ENCODE measurements at regions of chr3 and their contacts with region 1.

Region 1: DNA sequence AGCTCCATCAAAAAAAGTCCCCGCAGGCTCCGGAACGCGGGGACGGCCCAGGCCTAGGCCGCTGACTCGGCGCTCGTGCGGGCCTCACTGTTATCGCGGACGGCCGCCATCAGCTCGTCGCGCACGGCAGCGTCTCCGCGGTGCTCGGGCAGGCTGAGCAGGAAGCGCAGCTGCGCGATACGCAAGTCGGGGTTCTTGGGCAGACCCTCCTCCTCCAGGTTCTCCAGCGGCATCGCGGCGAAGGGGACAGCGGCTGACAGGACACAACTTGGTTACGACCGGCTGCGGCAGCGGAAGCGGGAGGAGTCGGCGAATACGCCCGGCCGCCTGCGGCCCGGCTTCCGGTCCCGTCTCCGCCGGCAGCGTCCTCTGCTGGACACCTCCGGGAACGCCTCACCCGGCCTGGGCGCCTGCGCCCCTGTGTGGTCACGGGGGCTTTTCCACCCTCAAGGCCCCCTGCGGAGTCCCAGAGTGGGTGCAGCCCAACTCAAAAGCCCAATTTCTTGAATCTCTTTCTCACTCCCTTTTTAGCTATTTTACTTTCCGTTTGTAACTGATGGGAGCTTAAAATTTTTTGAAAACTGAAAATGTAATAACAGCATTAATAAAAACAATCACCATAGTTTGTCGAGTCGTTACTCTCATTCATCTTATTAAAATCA is at the start of gene PSMD6:
- DNase-seq: peak; percentile 81
- H3K4me3 Mint-ChIP-seq: peak within 1 kb of the TSS; percentile 80
- H3K27ac Mint-ChIP-seq: peak within 1 kb of the TSS; percentile 92
- H3K4me1 Mint-ChIP-seq: peaks cover 6% of the 10 kb centered on the region
- H3K27me3 Mint-ChIP-seq: peaks cover 11% of the 10 kb centered on the region
- CTCF ChIP-seq: peak; percentile 97
- total RNA-seq, gene PSMD6: 62.7 and 66.0 TPM in 2 replicates

Region 2: DNA sequence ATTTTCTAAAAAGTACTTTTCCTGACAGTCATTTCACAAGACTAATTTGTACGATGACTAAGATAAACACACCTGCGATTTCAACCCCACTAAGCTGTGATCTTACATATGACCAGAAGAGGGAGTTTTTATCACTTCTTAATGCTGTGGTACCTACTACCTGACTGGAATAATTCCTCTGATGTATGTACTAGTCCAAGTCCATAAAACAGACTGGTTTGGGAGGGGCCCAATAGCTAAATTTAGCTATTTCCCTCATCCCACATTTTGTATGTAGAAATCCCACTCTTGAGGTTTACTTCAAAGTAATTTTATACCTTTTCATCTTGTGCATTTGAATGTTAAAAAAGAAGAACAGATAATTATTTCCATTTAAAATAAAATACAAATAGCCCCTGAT is 61.4 kb before region 1 on chr3:
- CTCF ChIA-PET with region 1: interaction called, 28 read pairs
- POLR2A ChIA-PET with region 1: interaction called, 7 read pairs
- intact Hi-C with region 1: loop called (anchors 2 kb)
- DNase-seq: peak; percentile 76
- H3K4me3 Mint-ChIP-seq: no peak overlapping the region
- H3K27ac Mint-ChIP-seq: no peak overlapping the region
- H3K4me1 Mint-ChIP-seq: peaks cover 13% of the 10 kb centered on the region
- H3K27me3 Mint-ChIP-seq: no peaks in the 10 kb centered on the region
- CTCF ChIP-seq: peak; percentile 52

Region 3: DNA sequence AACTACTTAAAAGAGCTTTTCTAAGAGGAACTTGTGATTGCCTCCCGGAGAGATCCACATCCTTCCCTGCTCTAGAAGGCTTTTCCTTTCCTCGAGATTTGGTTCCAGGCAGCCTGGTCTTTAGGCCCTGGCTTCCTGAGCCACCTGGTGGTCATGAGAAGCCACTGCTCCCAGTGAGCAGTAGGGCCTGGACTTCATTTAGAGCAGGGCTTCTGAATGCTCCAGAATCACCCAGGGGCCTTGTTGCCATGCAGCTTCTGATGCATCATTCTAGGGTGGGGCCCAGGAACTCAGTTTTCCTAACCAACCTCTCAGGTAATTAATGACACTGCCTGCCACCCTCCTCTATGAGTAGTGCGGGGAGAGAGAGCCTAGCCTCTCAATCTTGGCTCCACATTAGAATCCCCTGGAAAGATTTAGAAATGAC is 29.7 kb before region 1 on chr3:
- CTCF ChIA-PET with region 1: interaction called, 19 read pairs
- POLR2A ChIA-PET with region 1: no interaction called
- intact Hi-C with region 1: no loop called
- DNase-seq: peak; percentile 77
- H3K4me3 Mint-ChIP-seq: no peak overlapping the region
- H3K27ac Mint-ChIP-seq: peak overlapping the region; percentile 23
- H3K4me1 Mint-ChIP-seq: no peaks in the 10 kb centered on the region
- H3K27me3 Mint-ChIP-seq: no peaks in the 10 kb centered on the region
- CTCF ChIP-seq: peak; percentile 83

Region 4: DNA sequence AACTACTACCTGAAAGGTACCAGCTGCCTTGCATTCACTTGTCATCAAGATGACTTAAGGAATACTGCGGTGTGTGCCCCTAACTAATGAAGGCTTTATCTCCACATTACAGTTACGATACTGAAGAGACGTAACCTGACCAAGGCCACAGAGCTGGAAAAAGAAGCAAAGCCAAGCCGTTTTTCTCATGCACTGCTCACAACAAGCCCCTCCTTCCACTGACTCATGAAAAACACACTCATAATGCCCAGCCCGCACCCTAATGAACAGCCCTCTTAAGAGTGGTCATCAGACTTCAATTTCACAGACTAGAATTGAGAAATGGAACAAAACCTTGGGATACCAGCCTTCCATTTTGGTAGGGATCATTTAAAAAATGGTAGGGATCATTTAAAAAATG is 11.6 kb before region 1 on chr3:
- CTCF ChIA-PET with region 1: interaction called, 54 read pairs
- POLR2A ChIA-PET with region 1: interaction called, 18 read pairs
- intact Hi-C with region 1: no loop called
- DNase-seq: peak; percentile 44
- H3K4me3 Mint-ChIP-seq: no peak overlapping the region
- H3K27ac Mint-ChIP-seq: no peak overlapping the region
- H3K4me1 Mint-ChIP-seq: peaks cover 18% of the 10 kb centered on the region
- H3K27me3 Mint-ChIP-seq: no peaks in the 10 kb centered on the region
- CTCF ChIP-seq: no peak

Region 5: GRCh38 chr3:64213962-64214379 is 190.7 kb after region 1 on chr3:
- CTCF ChIA-PET with region 1: interaction called, 14 read pairs
- POLR2A ChIA-PET with region 1: interaction called, 3 read pairs
- intact Hi-C with region 1: no loop called
- DNase-seq: peak; percentile 91
- H3K4me3 Mint-ChIP-seq: peak overlapping the region; percentile 55
- H3K27ac Mint-ChIP-seq: peak overlapping the region; percentile 56
- H3K4me1 Mint-ChIP-seq: peaks cover 21% of the 10 kb centered on the region
- H3K27me3 Mint-ChIP-seq: no peaks in the 10 kb centered on the region
- CTCF ChIP-seq: no peak

Region 6: GRCh38 chr3:64489361-64490044 is 466.2 kb after region 1 on chr3:
- CTCF ChIA-PET with region 1: interaction called, 130 read pairs
- POLR2A ChIA-PET with region 1: interaction called, 5 read pairs
- intact Hi-C with region 1: no loop called
- DNase-seq: no peak
- H3K4me3 Mint-ChIP-seq: no peak overlapping the region
- H3K27ac Mint-ChIP-seq: no peak overlapping the region
- H3K4me1 Mint-ChIP-seq: no peaks in the 10 kb centered on the region
- H3K27me3 Mint-ChIP-seq: no peaks in the 10 kb centered on the region
- CTCF ChIP-seq: no peak

Region 7: DNA sequence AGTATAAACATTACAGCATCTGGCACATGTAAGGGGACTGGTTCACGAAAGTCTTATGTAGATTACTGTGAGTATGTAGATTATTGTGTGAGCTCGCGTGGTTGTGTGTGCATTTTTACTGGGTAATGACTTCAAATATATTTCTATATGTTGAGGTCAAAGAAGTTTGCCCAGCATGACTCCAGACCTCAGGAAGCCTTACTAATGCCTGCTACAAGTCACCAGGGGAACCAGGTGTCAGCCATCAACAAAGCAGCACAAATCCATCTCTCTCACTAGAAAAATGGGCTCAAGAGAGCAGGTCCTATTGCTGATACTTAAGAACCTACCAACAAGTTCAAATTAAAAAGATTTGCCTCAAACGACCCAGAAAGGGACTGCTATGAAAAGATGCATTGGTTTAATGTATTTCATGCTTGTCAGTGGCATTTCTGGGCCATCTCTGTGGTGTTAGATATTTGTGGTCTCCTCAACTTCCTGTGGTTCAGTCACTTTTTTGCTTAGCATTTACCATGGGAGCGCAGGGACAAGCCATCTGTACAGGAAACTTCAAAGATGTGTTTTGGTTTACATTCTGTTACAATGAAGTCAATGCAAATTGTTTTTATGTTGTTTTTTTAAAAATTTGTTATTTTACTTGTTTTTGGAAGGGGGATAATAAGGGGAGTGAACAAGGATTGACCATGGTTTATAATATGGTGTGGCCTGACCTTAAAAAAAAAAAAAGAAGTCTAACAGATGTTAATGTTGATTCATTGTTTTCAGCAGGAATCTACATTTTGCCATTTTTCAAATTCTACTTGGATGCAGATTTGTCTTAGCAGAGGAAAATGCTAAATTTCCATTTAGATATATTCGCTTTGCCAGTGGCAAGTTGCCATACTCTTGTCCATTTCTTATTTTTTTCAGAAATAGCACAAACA is 836.6 kb after region 1 on chr3:
- CTCF ChIA-PET with region 1: no interaction called
- POLR2A ChIA-PET with region 1: no interaction called
- intact Hi-C with region 1: no loop called
- DNase-seq: no peak
- H3K4me3 Mint-ChIP-seq: no peak overlapping the region
- H3K27ac Mint-ChIP-seq: no peak overlapping the region
- H3K4me1 Mint-ChIP-seq: no peaks in the 10 kb centered on the region
- H3K27me3 Mint-ChIP-seq: no peaks in the 10 kb centered on the region
- CTCF ChIP-seq: no peak

Measured in MCF 10A (cell line).